IMR-90 (cell line): ENCODE measurements at regions of chr4 and their contacts with region 1.

Region 1: DNA sequence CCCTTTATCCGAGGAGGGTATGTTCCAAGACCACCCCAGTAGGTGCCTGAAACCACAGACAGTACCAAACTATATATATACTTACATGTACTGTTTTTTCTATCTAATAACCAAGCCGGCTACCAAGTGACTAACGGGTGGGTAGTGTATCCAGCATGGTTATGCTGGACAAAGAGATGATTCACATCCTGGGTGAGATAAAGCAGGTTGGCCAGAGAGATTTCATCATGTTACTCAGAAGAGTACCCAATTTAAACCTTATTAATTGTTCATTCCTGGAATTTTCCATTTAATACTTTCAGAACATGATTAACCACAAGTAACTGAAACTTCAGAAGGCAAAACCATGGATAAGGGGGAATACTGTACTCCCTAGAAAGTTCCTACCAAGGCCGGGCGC is 46.5 kb downstream of the RFC1 start:
- DNase-seq: peak; percentile 90
- ATAC-seq: peak; percentile 87
- H3K4me3 ChIP-seq: no peak overlapping the region
- H3K27ac ChIP-seq: no peak overlapping the region; the same call in 1 of the 2 replicates
- H3K4me1 ChIP-seq: peaks cover 6% of the 10 kb centered on the region; the same call in 1 of the 2 replicates
- H3K27me3 ChIP-seq: no peaks in the 10 kb centered on the region
- CTCF ChIP-seq: no peak
- POLR2A ChIP-seq: no peak
- RAD21 ChIP-seq: no peak

Region 2: GRCh38 chr4:39365830-39366771 is 46.4 kb after region 1 on chr4 and contains the start of gene RFC1:
- CTCF ChIA-PET with region 1: no interaction called
- POLR2A ChIA-PET with region 1: no interaction called
- dilution Hi-C with region 1: no loop called
- in situ Hi-C with region 1: no loop called
- intact Hi-C with region 1: loop called (anchors 5 kb)
- DNase-seq: peak; percentile 88
- ATAC-seq: peak; percentile 80
- H3K4me3 ChIP-seq: peak within 1 kb of the TSS; percentile 65
- H3K27ac ChIP-seq: peak within 1 kb of the TSS; percentile 76
- H3K4me1 ChIP-seq: peaks cover 3% of the 10 kb centered on the region
- H3K27me3 ChIP-seq: no peaks in the 10 kb centered on the region
- CTCF ChIP-seq: no peak
- POLR2A ChIP-seq: no peak
- RAD21 ChIP-seq: no peak
- total RNA-seq, gene RFC1: 49.3 and 57.8 TPM in 2 replicates